ENCODE measurements at regions of chr13 and their contacts with region 1.

Region 1: DNA sequence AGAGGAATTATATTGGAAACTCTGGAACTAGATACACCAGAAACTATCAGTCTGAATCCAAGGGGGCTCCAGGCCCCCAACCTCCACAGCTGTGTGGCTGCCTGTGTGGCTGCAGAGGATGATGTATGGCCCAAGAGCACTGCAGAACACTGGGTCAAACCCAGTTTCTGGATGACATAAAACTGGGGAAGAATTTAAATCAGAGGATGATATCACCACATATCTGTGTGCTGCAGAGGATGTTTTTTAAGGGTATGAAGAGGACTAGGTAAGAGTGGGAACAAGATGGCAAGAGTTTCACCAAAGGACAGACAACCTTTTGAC is 226.4 kb downstream of the SUCLA2 start:
- DNase-seq: no peak
- ATAC-seq: no peak
- H3K4me3 Mint-ChIP-seq: no peak overlapping the region
- H3K27ac Mint-ChIP-seq: no peak overlapping the region
- H3K4me1 Mint-ChIP-seq: no peaks in the 10 kb centered on the region
- H3K27me3 Mint-ChIP-seq: peaks cover 9% of the 10 kb centered on the region
- CTCF ChIP-seq: no peak

Region 2: DNA sequence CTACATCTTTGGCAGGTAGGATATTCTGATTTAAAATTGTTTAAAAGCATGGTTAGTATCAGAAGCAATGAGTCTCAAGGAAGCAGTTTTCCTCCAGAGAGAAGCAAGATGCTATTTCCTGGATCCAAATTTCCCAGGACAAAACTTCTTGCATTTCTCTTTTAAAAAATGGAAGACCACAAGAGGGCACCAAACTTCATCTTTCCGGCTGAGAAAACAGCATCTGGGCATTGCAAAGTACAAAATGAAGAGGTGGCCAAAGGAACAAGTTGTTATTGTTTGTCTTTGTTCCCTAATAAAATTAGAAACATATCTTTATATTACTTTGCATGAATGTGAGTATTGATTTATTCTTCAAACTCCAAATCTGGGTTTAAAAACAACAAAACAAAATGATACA is 1281.7 kb before region 1 on chr13:
- CTCF ChIA-PET with region 1: no interaction called
- POLR2A ChIA-PET with region 1: no interaction called
- intact Hi-C with region 1: loop called (anchors 5 kb)
- DNase-seq: no peak
- ATAC-seq: no peak
- H3K4me3 Mint-ChIP-seq: no peak overlapping the region
- H3K27ac Mint-ChIP-seq: no peak overlapping the region
- H3K4me1 Mint-ChIP-seq: no peaks in the 10 kb centered on the region
- H3K27me3 Mint-ChIP-seq: no peaks in the 10 kb centered on the region
- CTCF ChIP-seq: peak; percentile 65

Region 3: GRCh38 chr13:46759846-46760245 is 1014.8 kb before region 1 on chr13:
- CTCF ChIA-PET with region 1: interaction called, 3 read pairs
- POLR2A ChIA-PET with region 1: no interaction called
- intact Hi-C with region 1: loop called (anchors 10 kb)
- DNase-seq: no peak
- ATAC-seq: no peak
- H3K4me3 Mint-ChIP-seq: no peak overlapping the region
- H3K27ac Mint-ChIP-seq: no peak overlapping the region
- H3K4me1 Mint-ChIP-seq: peaks cover 21% of the 10 kb centered on the region
- H3K27me3 Mint-ChIP-seq: peaks cover 1% of the 10 kb centered on the region
- CTCF ChIP-seq: no peak

Region 4: GRCh38 chr13:46831588-46832194 is 942.9 kb before region 1 on chr13:
- CTCF ChIA-PET with region 1: interaction called, 5 read pairs
- POLR2A ChIA-PET with region 1: no interaction called
- intact Hi-C with region 1: loop called (anchors 1 kb)
- DNase-seq: no peak
- ATAC-seq: no peak
- H3K4me3 Mint-ChIP-seq: no peak overlapping the region
- H3K27ac Mint-ChIP-seq: no peak overlapping the region
- H3K4me1 Mint-ChIP-seq: no peaks in the 10 kb centered on the region
- H3K27me3 Mint-ChIP-seq: peaks cover 1% of the 10 kb centered on the region
- CTCF ChIP-seq: peak; percentile 87

Region 5: GRCh38 chr13:46893798-46894560 is 880.7 kb before region 1 on chr13:
- CTCF ChIA-PET with region 1: interaction called, 5 read pairs
- POLR2A ChIA-PET with region 1: no interaction called
- intact Hi-C with region 1: loop called (anchors 1 kb)
- DNase-seq: peak; percentile 67
- ATAC-seq: peak; percentile 91
- H3K4me3 Mint-ChIP-seq: peak overlapping the region; percentile 74
- H3K27ac Mint-ChIP-seq: no peak overlapping the region
- H3K4me1 Mint-ChIP-seq: peaks cover 24% of the 10 kb centered on the region
- H3K27me3 Mint-ChIP-seq: peaks cover 32% of the 10 kb centered on the region
- CTCF ChIP-seq: peak; percentile 72

Region 6: DNA sequence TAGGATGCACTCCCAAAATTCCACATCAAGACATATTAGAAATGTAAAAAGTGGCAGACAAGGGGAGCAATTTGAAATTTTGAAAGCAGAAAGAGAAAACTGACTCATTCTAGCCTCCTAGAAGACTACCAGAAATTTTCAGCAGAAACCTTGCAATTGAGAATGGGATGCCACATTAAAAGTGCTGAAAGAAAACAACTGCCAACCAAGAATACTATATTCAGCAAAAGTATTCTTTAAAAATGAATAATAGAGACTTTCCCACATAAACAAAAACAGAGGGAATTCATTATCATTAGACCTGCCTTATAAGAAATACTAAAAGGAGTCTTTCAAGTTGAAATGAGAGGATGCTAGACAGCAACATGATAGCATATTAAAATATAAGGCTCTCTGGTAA is 799.5 kb before region 1 on chr13:
- CTCF ChIA-PET with region 1: interaction called, 3 read pairs
- POLR2A ChIA-PET with region 1: no interaction called
- intact Hi-C with region 1: loop called (anchors 1 kb)
- DNase-seq: no peak
- ATAC-seq: no peak
- H3K4me3 Mint-ChIP-seq: no peak overlapping the region
- H3K27ac Mint-ChIP-seq: no peak overlapping the region
- H3K4me1 Mint-ChIP-seq: peaks cover 8% of the 10 kb centered on the region
- H3K27me3 Mint-ChIP-seq: no peaks in the 10 kb centered on the region
- CTCF ChIP-seq: no peak

Region 7: GRCh38 chr13:47350334-47351124 is 424.1 kb before region 1 on chr13:
- CTCF ChIA-PET with region 1: no interaction called
- POLR2A ChIA-PET with region 1: no interaction called
- intact Hi-C with region 1: no loop called
- DNase-seq: no peak
- ATAC-seq: no peak
- H3K4me3 Mint-ChIP-seq: no peak overlapping the region
- H3K27ac Mint-ChIP-seq: no peak overlapping the region
- H3K4me1 Mint-ChIP-seq: no peaks in the 10 kb centered on the region
- H3K27me3 Mint-ChIP-seq: no peaks in the 10 kb centered on the region
- CTCF ChIP-seq: no peak

Region 8: GRCh38 chr13:47816840-47817239 is 42.2 kb after region 1 on chr13:
- CTCF ChIA-PET with region 1: no interaction called
- POLR2A ChIA-PET with region 1: no interaction called
- intact Hi-C with region 1: no loop called
- DNase-seq: no peak
- ATAC-seq: no peak
- H3K4me3 Mint-ChIP-seq: no peak overlapping the region
- H3K27ac Mint-ChIP-seq: no peak overlapping the region
- H3K4me1 Mint-ChIP-seq: no peaks in the 10 kb centered on the region
- H3K27me3 Mint-ChIP-seq: no peaks in the 10 kb centered on the region
- CTCF ChIP-seq: no peak

Measured in activated B cell treated with CpG ODN at 0.5 μM for 24 hours (primary cell).